Activated CD4-positive, alpha-beta memory T cell treated with anti-CD3 and anti-CD28 coated beads for 36 hours (primary cell): ENCODE measurements at regions of chr1 and their contacts with region 1.

Region 1: DNA sequence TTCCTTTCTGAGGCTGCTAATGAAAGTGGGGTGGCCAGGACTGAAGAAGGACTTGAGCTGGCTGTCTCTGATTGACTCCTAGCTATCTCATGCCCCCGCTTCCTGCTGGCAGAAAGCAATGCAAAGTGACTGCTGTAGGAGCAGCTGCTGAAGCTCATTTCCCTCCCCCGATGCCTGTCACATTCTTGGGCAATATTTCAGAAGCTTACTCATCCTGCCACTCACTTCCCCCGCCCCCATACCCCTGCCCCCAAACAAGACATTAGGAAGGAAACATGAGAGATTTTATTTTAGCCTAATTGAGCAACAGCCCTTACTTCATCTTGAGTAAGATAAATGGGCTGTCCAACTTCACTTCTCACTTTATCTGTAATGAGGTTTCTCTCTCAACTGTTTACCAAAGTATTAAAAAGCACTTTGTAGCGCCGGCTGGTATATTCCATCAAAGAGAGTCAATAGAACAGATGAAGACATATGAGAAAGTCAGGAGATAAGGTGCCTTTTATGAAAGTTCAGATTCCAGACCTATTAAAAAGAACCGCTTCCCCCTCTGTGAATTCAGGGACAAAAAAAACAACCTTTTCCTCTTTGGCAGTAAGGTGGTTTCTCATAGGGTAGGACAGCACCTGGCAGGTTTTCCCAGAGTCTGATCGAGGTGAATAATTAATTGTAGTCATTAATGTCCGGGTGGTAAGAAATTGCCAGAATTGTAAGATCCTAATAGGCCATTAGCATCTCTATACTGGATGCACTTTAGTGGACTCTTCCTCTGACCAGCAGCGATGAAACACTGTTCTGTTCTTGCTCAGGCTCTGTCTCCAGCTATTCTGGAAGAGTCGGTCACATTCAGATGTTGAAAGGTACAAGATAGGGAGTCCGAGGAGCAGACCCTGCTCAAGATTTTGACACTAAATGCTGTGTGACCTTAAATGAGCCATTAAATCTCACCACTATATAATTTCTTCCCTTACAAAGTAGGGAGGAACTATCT is 70.2 kb downstream of the SH3GLB1 start:
- DNase-seq: peak; percentile 81
- H3K4me3 Mint-ChIP-seq: peak overlapping the region; percentile 14
- H3K27ac Mint-ChIP-seq: peak overlapping the region; percentile 18
- H3K4me1 Mint-ChIP-seq: peaks cover 15% of the 10 kb centered on the region
- H3K27me3 Mint-ChIP-seq: peaks cover 2% of the 10 kb centered on the region

Region 2: DNA sequence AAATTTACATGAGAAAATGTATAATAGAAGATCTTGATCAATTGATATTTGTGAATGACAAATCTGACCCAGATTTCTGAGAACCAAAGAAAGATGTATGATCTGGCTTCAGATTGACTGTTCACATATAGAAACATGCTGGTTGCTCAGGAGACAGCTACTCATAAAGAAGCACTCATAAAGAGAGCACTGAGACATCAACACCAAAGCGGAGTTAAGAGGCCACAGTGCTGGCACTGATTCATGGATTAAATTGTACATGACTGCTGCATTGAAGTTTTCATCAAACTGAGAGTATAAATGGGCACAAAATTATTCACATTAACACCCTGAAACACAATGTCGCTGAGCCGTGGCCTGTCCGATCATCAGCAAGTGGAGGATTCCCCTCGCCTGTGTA is 24.1 kb before region 1 on chr1:
- CTCF ChIA-PET with region 1: no interaction called
- POLR2A ChIA-PET with region 1: no interaction called
- intact Hi-C with region 1: loop called (anchors 2 kb)
- DNase-seq: peak; percentile 32
- H3K4me3 Mint-ChIP-seq: no peak overlapping the region
- H3K27ac Mint-ChIP-seq: no peak overlapping the region
- H3K4me1 Mint-ChIP-seq: peaks cover 12% of the 10 kb centered on the region
- H3K27me3 Mint-ChIP-seq: peaks cover 13% of the 10 kb centered on the region